ENCODE measurements at regions of chr19 and their contacts with region 1.

Region 1: DNA sequence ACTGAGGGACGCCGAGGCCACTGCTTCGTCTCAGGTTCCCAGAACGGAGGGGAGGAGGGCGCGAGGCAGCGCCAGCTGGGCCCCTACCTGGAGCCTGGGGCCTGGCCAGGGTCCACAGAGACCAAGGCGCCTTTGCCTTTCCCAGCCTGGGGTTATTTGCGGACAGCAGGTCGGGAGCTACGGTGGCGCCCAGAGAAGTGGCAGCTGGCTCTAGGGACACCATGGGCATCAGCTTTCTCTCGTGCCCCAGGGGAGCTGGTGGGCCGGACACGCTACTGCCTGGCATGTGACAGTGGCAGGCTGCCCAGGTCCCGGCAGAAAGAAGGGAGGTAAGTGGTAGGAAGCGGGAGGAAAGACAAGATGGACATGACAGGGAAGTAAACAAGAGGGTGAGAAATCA is 19.0 kb downstream of the AKT2 start:
- DNase-seq: no peak
- ATAC-seq: no peak
- H3K4me3 ChIP-seq: no peak overlapping the region
- H3K27ac ChIP-seq: no peak overlapping the region
- H3K4me1 ChIP-seq: no peaks in the 10 kb centered on the region
- CTCF ChIP-seq: no peak
- EP300 ChIP-seq: no peak
- POLR2A ChIP-seq: no peak
- RAD21 ChIP-seq: no peak

Region 2: GRCh38 chr19:40253611-40254092 is 12.5 kb before region 1 on chr19:
- CTCF ChIA-PET with region 1: interaction called, 10 read pairs
- POLR2A ChIA-PET with region 1: no interaction called
- DNase-seq: no peak
- ATAC-seq: no peak
- H3K4me3 ChIP-seq: no peak overlapping the region
- H3K27ac ChIP-seq: no peak overlapping the region
- H3K4me1 ChIP-seq: 0 out of 3 replicates have a peak, but pooled peaks cover 4% of the 10 kb centered on the region
- CTCF ChIP-seq: no peak
- EP300 ChIP-seq: no peak
- POLR2A ChIP-seq: no peak
- RAD21 ChIP-seq: no peak

Region 3: GRCh38 chr19:40285353-40286234 is 19.5 kb after region 1 on chr19:
- CTCF ChIA-PET with region 1: interaction called, 86 read pairs
- POLR2A ChIA-PET with region 1: no interaction called
- DNase-seq: peak; percentile 100
- ATAC-seq: peak; percentile 86 to 95
- H3K4me3 ChIP-seq: peak overlapping the region; percentile 86
- H3K27ac ChIP-seq: peak overlapping the region; percentile 78 to 90
- H3K4me1 ChIP-seq: peaks cover 17% of the 10 kb centered on the region
- CTCF ChIP-seq: no peak
- EP300 ChIP-seq: no peak
- POLR2A ChIP-seq: peak; percentile 74
- RAD21 ChIP-seq: no peak

Measured in A549 (cell line).